Activated B cell treated with CpG ODN at 0.5 μM for 24 hours (primary cell): ENCODE measurements at regions of chr5 and their contacts with region 1.

Region 1: GRCh38 chr5:139385061-139386049 is 2.3 kb upstream of the SLC23A1 start:
- DNase-seq: no peak
- ATAC-seq: no peak
- H3K4me3 Mint-ChIP-seq: peak overlapping the region; percentile 60
- H3K27ac Mint-ChIP-seq: peak overlapping the region; percentile 95
- H3K4me1 Mint-ChIP-seq: peaks cover 85% of the 10 kb centered on the region
- H3K27me3 Mint-ChIP-seq: no peaks in the 10 kb centered on the region
- CTCF ChIP-seq: no peak

Region 2: GRCh38 chr5:139368613-139369012 is 16.7 kb before region 1 on chr5:
- CTCF ChIA-PET with region 1: interaction called, 4 read pairs
- POLR2A ChIA-PET with region 1: no interaction called
- intact Hi-C with region 1: loop called (anchors 2 kb)
- DNase-seq: no peak
- ATAC-seq: no peak
- H3K4me3 Mint-ChIP-seq: no peak overlapping the region
- H3K27ac Mint-ChIP-seq: peak overlapping the region; percentile 41
- H3K4me1 Mint-ChIP-seq: no peaks in the 10 kb centered on the region
- H3K27me3 Mint-ChIP-seq: no peaks in the 10 kb centered on the region
- CTCF ChIP-seq: no peak